B cell (primary cell): ENCODE measurements at regions of chr1 and their contacts with region 1.

Region 1: DNA sequence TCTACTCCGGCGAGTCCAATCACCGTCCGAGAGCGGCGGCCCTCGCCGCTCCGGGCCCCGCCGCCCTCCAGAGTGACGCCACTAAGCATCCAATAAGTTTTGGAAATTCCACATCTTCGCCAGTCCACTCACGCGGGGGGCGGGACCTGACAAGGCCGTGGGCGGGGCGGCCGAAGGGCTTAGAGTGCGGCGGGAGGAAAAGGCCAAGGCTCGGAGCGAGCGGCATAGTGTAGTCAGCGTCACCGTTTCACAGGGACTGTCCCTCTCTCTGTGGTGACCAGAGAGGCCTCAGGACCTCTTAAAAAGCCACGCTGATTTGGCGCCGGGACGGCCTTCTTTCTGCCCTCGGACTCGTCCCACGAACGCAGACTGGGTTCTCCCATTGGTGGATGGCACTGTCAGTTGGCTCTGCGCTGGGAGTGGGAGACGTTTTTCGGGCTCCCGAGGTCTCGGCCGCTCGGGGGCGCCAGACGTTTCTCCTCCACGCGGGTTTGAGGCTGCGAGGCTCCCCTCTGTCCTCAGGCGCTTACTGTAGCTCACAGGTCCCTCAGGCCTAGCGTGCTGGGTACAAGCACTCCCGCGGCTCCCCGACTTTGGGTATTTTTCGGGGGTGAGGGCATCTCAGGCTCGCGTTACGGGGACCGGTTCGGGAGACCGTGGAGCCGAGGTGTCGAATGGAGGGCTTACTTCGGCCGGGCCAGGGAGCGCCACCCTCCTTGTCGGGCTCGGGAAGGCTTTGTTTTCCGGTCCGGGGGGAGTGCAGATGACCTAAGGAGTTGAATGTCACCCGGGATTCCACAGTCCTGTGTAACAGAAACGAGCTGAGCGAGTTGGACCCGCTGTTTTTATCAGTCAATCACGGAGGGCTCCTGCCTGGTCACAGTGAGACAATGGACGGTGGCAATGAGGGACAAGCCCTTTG is 488 bp upstream of the TRIM45 start:
- DNase-seq: peak; percentile 88
- ATAC-seq: peak; percentile 87
- H3K4me3 ChIP-seq: peak overlapping the region; percentile 72 to 88 (median 80)
- H3K4me3 Mint-ChIP-seq: peak overlapping the region; percentile 92
- H3K27ac ChIP-seq: peak overlapping the region in 1 of 2 donors; percentile 32
- H3K27ac Mint-ChIP-seq: peak overlapping the region; percentile 69
- H3K4me1 ChIP-seq: peaks cover 9 to 15% of the 10 kb centered on the region in 2 donors
- H3K4me1 Mint-ChIP-seq: peaks cover 7% of the 10 kb centered on the region
- H3K27me3 ChIP-seq: peaks cover 0 to 13% (median 3%) of the 10 kb centered on the region in 4 experiments
- H3K27me3 Mint-ChIP-seq: peaks cover 6% of the 10 kb centered on the region
- CTCF ChIP-seq: peak; percentile 72

Region 2: GRCh38 chr1:116133696-116134650 is 988.1 kb before region 1 on chr1:
- CTCF ChIA-PET with region 1: no interaction called
- POLR2A ChIA-PET with region 1: no interaction called
- intact Hi-C with region 1: loop called (anchors 10 kb)
- DNase-seq: no peak
- ATAC-seq: no peak
- H3K4me3 ChIP-seq: no peak overlapping the region
- H3K4me3 Mint-ChIP-seq: no peak overlapping the region
- H3K27ac ChIP-seq: no peak overlapping the region
- H3K27ac Mint-ChIP-seq: no peak overlapping the region
- H3K4me1 ChIP-seq: no peaks in the 10 kb centered on the region
- H3K4me1 Mint-ChIP-seq: peaks cover 2% of the 10 kb centered on the region
- H3K27me3 ChIP-seq: peaks cover 0 to 10% (median 1%) of the 10 kb centered on the region in 4 experiments
- H3K27me3 Mint-ChIP-seq: peaks cover 17% of the 10 kb centered on the region
- CTCF ChIP-seq: no peak

Region 3: GRCh38 chr1:116990612-116991151 is 131.4 kb before region 1 on chr1:
- CTCF ChIA-PET with region 1: no interaction called
- POLR2A ChIA-PET with region 1: no interaction called
- intact Hi-C with region 1: no loop called
- DNase-seq: no peak
- ATAC-seq: no peak
- H3K4me3 ChIP-seq: no peak overlapping the region
- H3K4me3 Mint-ChIP-seq: no peak overlapping the region
- H3K27ac ChIP-seq: no peak overlapping the region
- H3K27ac Mint-ChIP-seq: no peak overlapping the region
- H3K4me1 ChIP-seq: no peaks in the 10 kb centered on the region
- H3K4me1 Mint-ChIP-seq: no peaks in the 10 kb centered on the region
- H3K27me3 ChIP-seq: peaks cover 0 to 2% (median 0%) of the 10 kb centered on the region in 4 experiments
- H3K27me3 Mint-ChIP-seq: peaks cover 8% of the 10 kb centered on the region
- CTCF ChIP-seq: no peak

Region 4: GRCh38 chr1:117161898-117162297 is 39.9 kb after region 1 on chr1:
- CTCF ChIA-PET with region 1: no interaction called
- POLR2A ChIA-PET with region 1: no interaction called
- intact Hi-C with region 1: no loop called
- DNase-seq: no peak
- ATAC-seq: no peak
- H3K4me3 ChIP-seq: no peak overlapping the region
- H3K4me3 Mint-ChIP-seq: no peak overlapping the region
- H3K27ac ChIP-seq: no peak overlapping the region
- H3K27ac Mint-ChIP-seq: no peak overlapping the region
- H3K4me1 ChIP-seq: no peaks in the 10 kb centered on the region
- H3K4me1 Mint-ChIP-seq: no peaks in the 10 kb centered on the region
- H3K27me3 ChIP-seq: peaks cover 0 to 8% (median 1%) of the 10 kb centered on the region in 4 experiments
- H3K27me3 Mint-ChIP-seq: peaks cover 48% of the 10 kb centered on the region
- CTCF ChIP-seq: no peak

Region 5: GRCh38 chr1:117367047-117368018 is 245.3 kb after region 1 on chr1 and contains the start of gene MAN1A2:
- CTCF ChIA-PET with region 1: no interaction called
- POLR2A ChIA-PET with region 1: no interaction called
- intact Hi-C with region 1: loop called (anchors 1 kb)
- DNase-seq: peak; percentile 90
- ATAC-seq: peak; percentile 76
- H3K4me3 ChIP-seq: peak within 1 kb of the TSS; percentile 84 to 94 (median 92)
- H3K4me3 Mint-ChIP-seq: peak within 1 kb of the TSS; percentile 96
- H3K27ac ChIP-seq: peak within 1 kb of the TSS; percentile 86 to 88
- H3K27ac Mint-ChIP-seq: peak within 1 kb of the TSS; percentile 98
- H3K4me1 ChIP-seq: peaks cover 34 to 46% of the 10 kb centered on the region in 2 donors
- H3K4me1 Mint-ChIP-seq: peaks cover 63% of the 10 kb centered on the region
- H3K27me3 ChIP-seq: no peaks in the 10 kb centered on the region
- H3K27me3 Mint-ChIP-seq: no peaks in the 10 kb centered on the region
- CTCF ChIP-seq: no peak
- total RNA-seq, gene MAN1A2: 54.0 and 55.6 TPM in 2 replicates

Region 6: GRCh38 chr1:117664314-117664713 is 542.3 kb after region 1 on chr1:
- CTCF ChIA-PET with region 1: no interaction called
- POLR2A ChIA-PET with region 1: no interaction called
- intact Hi-C with region 1: loop called (anchors 1 kb)
- DNase-seq: peak; percentile 92
- ATAC-seq: peak; percentile 87
- H3K4me3 ChIP-seq: peak overlapping the region in 1 of 5 experiments; percentile 37
- H3K4me3 Mint-ChIP-seq: peak overlapping the region; percentile 74
- H3K27ac ChIP-seq: peak overlapping the region; percentile 97 to 99
- H3K27ac Mint-ChIP-seq: peak overlapping the region; percentile 90
- H3K4me1 ChIP-seq: peaks cover 78 to 86% of the 10 kb centered on the region in 2 donors
- H3K4me1 Mint-ChIP-seq: peaks cover 84% of the 10 kb centered on the region
- H3K27me3 ChIP-seq: no peaks in the 10 kb centered on the region
- H3K27me3 Mint-ChIP-seq: no peaks in the 10 kb centered on the region
- CTCF ChIP-seq: no peak

Region 7: GRCh38 chr1:117929173-117929989 is 807.3 kb after region 1 on chr1 and contains the starts of genes GDAP2 and WDR3:
- CTCF ChIA-PET with region 1: no interaction called
- POLR2A ChIA-PET with region 1: no interaction called
- intact Hi-C with region 1: loop called (anchors 1 kb)
- DNase-seq: peak; percentile 96
- ATAC-seq: peak; percentile 89
- H3K4me3 ChIP-seq: peak within 1 kb of the TSS; percentile 82 to 91 (median 86)
- H3K4me3 Mint-ChIP-seq: peak within 1 kb of the TSS; percentile 99
- H3K27ac ChIP-seq: peak within 1 kb of the TSS; percentile 77 to 91
- H3K27ac Mint-ChIP-seq: peak within 1 kb of the TSS; percentile 92
- H3K4me1 ChIP-seq: peaks cover 24 to 31% of the 10 kb centered on the region in 2 donors
- H3K4me1 Mint-ChIP-seq: peaks cover 59% of the 10 kb centered on the region
- H3K27me3 ChIP-seq: no peaks in the 10 kb centered on the region
- H3K27me3 Mint-ChIP-seq: no peaks in the 10 kb centered on the region
- CTCF ChIP-seq: no peak
- total RNA-seq, gene GDAP2: 36.7 and 41.5 TPM in 2 replicates
- total RNA-seq, gene WDR3: 14.9 and 18.5 TPM in 2 replicates